ENCODE measurements at regions of chr1 and their contacts with region 1.

Region 1: GRCh38 chr1:89524369-89525168 is at the start of gene LRRC8B:
- DNase-seq: peak; percentile 80 to 91 (median 86)
- ATAC-seq: peak; percentile 94
- H3K4me3 ChIP-seq: peak within 1 kb of the TSS; percentile 93
- H3K4me3 Mint-ChIP-seq: peak within 1 kb of the TSS in 1 of 10 donors; percentile 76
- H3K27ac ChIP-seq: peak within 1 kb of the TSS; percentile 92
- H3K27ac Mint-ChIP-seq: peak within 1 kb of the TSS in 8 of 9 donors; percentile 89 to 97 (median 94)
- H3K4me1 ChIP-seq: peaks cover 7 to 34% of the 10 kb centered on the region in 2 donors
- H3K4me1 Mint-ChIP-seq: peaks cover 11 to 31% (median 21%) of the 10 kb centered on the region in 7 donors
- H3K27me3 ChIP-seq: no peaks in the 10 kb centered on the region
- H3K27me3 Mint-ChIP-seq: no peaks in the 10 kb centered on the region
- total RNA-seq, gene LRRC8B: 8.8 to 23.0 (median 17.1) TPM

Region 2: DNA sequence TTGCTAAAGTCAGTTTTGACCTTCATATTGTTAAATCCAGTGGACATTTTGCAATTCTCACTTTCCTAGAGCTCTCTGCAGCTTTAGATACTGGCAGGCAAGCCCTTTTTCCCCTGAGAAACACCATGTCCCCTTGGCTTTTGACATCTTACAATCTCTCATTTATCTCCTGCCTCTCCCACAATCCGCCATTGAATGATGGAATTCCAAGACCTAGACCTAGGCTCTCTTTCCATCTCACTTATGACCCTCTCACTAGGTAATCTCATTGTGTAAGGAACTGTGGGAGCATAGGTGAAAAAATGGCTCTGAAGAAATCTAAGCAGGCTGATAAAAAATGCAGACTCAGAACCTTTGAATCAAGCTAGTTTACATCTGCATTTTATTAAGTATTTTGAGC is 534.1 kb before region 1 on chr1:
- CTCF ChIA-PET with region 1: no interaction called
- POLR2A ChIA-PET with region 1: interaction called, 4 read pairs
- intact Hi-C with region 1: loop called in 1 of 2 experiments (anchors 1 kb)
- DNase-seq: no peak
- ATAC-seq: no peak
- H3K4me3 ChIP-seq: no peak overlapping the region
- H3K4me3 Mint-ChIP-seq: peak overlapping the region in 4 of 10 donors; percentile 1 to 42 (median 23)
- H3K27ac ChIP-seq: no peak overlapping the region
- H3K27ac Mint-ChIP-seq: peak overlapping the region in 6 of 9 donors; percentile 61 to 90 (median 78)
- H3K4me1 ChIP-seq: peaks cover 15 to 28% of the 10 kb centered on the region in 2 donors
- H3K4me1 Mint-ChIP-seq: peaks cover 24 to 56% (median 45%) of the 10 kb centered on the region in 7 donors
- H3K27me3 ChIP-seq: no peaks in the 10 kb centered on the region
- H3K27me3 Mint-ChIP-seq: no peaks in the 10 kb centered on the region

Region 3: DNA sequence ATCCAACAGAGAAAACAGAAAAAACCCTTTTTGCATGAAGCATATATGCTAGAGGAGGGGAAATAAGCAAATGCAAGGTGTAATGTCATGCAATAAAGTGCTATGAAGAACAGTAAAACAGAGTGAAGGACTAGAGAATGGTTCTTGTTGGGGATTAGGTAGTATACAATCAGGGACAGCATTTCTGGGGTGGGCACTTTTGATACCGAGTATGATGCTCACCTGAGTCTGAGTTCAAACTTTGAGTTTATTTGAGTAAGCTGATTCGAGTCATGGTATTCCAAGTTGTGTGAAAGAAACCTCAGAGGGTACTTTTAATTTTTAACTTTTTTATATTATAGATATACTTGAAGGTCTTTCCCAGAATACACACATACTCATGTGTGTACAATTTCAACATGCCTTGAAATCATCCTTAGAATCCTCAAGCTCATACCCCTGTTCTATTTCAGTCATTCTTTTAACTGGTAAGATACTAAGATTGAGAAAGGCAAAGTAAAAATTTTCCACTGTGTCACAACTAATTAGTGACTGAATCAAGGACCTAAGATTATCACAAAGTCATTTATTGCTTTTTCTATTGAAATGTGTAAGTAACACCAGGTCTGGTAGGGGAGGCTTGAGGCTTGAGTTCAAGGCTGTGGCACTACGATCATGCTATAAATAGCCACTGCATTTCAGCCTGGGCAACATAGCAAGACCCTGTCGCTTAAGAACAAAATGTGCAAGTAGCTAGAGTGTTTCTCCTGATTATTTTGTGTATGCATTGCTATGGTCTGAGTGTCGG is 12.2 kb after region 1 on chr1:
- CTCF ChIA-PET with region 1: interaction called, 5 read pairs
- POLR2A ChIA-PET with region 1: interaction called, 7 read pairs
- intact Hi-C with region 1: loop called in 1 of 2 experiments (anchors 1 kb)
- DNase-seq: no peak
- ATAC-seq: no peak
- H3K4me3 ChIP-seq: no peak overlapping the region
- H3K4me3 Mint-ChIP-seq: peak overlapping the region in 2 of 10 donors; percentile 8 to 38
- H3K27ac ChIP-seq: no peak overlapping the region
- H3K27ac Mint-ChIP-seq: peak overlapping the region in 5 of 9 donors; percentile 6 to 80 (median 32)
- H3K4me1 ChIP-seq: no peaks in the 10 kb centered on the region
- H3K4me1 Mint-ChIP-seq: peaks cover 33 to 89% (median 82%) of the 10 kb centered on the region in 7 donors
- H3K27me3 ChIP-seq: no peaks in the 10 kb centered on the region
- H3K27me3 Mint-ChIP-seq: no peaks in the 10 kb centered on the region

Region 4: GRCh38 chr1:89598450-89599331 is 74.1 kb after region 1 on chr1:
- CTCF ChIA-PET with region 1: interaction called, 5 read pairs
- POLR2A ChIA-PET with region 1: interaction called, 10 read pairs
- intact Hi-C with region 1: loop called (anchors 1 kb)
- DNase-seq: peak in 5 of 9 donors; percentile 19 to 43 (median 35)
- ATAC-seq: peak; percentile 82
- H3K4me3 ChIP-seq: no peak overlapping the region
- H3K4me3 Mint-ChIP-seq: peak overlapping the region in 8 of 10 donors; percentile 1 to 67 (median 48)
- H3K27ac ChIP-seq: no peak overlapping the region
- H3K27ac Mint-ChIP-seq: peak overlapping the region; percentile 51 to 99 (median 79)
- H3K4me1 ChIP-seq: peaks cover 17 to 55% of the 10 kb centered on the region in 2 donors
- H3K4me1 Mint-ChIP-seq: peaks cover 42 to 98% (median 92%) of the 10 kb centered on the region in 7 donors
- H3K27me3 ChIP-seq: no peaks in the 10 kb centered on the region
- H3K27me3 Mint-ChIP-seq: no peaks in the 10 kb centered on the region

Region 5: GRCh38 chr1:89622895-89623294 is 98.3 kb after region 1 on chr1:
- CTCF ChIA-PET with region 1: interaction called, 3 read pairs
- POLR2A ChIA-PET with region 1: interaction called, 4 read pairs
- intact Hi-C with region 1: loop called in 1 of 2 experiments (anchors 1 kb)
- DNase-seq: peak in 5 of 9 donors; percentile 29 to 58 (median 39)
- ATAC-seq: peak; percentile 71
- H3K4me3 ChIP-seq: no peak overlapping the region
- H3K4me3 Mint-ChIP-seq: peak overlapping the region in 3 of 10 donors; percentile 16 to 54 (median 31)
- H3K27ac ChIP-seq: no peak overlapping the region
- H3K27ac Mint-ChIP-seq: peak overlapping the region in 8 of 9 donors; percentile 35 to 98 (median 78)
- H3K4me1 ChIP-seq: peaks cover 9 to 22% of the 10 kb centered on the region in 2 donors
- H3K4me1 Mint-ChIP-seq: peaks cover 15 to 78% (median 61%) of the 10 kb centered on the region in 7 donors
- H3K27me3 ChIP-seq: no peaks in the 10 kb centered on the region
- H3K27me3 Mint-ChIP-seq: no peaks in the 10 kb centered on the region

Region 6: DNA sequence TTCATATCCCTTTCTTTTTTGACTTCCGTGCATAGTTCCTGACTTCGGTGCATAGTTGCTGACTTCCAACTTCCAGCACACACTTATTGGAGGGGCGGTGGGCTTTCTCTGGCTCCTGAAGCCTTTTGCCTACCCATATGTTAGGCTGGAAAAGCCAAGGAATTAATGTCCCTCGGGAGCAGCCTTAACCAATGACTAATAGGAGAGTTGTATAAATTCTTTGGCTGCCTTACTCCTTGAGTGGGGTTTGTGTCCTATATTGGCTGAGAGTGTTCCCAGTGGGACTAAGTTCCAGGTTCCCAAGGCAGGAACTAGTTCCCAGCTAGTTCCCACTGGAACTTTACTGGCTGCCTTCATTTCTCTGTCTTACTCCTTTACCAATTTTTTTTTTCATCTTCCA is 576.0 kb after region 1 on chr1:
- CTCF ChIA-PET with region 1: no interaction called
- POLR2A ChIA-PET with region 1: no interaction called
- intact Hi-C with region 1: no loop called
- DNase-seq: no peak
- ATAC-seq: no peak
- H3K4me3 ChIP-seq: no peak overlapping the region
- H3K4me3 Mint-ChIP-seq: no peak overlapping the region
- H3K27ac ChIP-seq: no peak overlapping the region
- H3K27ac Mint-ChIP-seq: no peak overlapping the region
- H3K4me1 ChIP-seq: no peaks in the 10 kb centered on the region
- H3K4me1 Mint-ChIP-seq: no peaks in the 10 kb centered on the region
- H3K27me3 ChIP-seq: no peaks in the 10 kb centered on the region
- H3K27me3 Mint-ChIP-seq: peaks cover 0 to 14% (median 2%) of the 10 kb centered on the region in 5 donors

Measured in naive thymus-derived CD4-positive, alpha-beta T cell (primary cell).